Astrocyte of the cerebellum (primary cell): ENCODE measurements at regions of chr5 and their contacts with region 1.

Region 1: DNA sequence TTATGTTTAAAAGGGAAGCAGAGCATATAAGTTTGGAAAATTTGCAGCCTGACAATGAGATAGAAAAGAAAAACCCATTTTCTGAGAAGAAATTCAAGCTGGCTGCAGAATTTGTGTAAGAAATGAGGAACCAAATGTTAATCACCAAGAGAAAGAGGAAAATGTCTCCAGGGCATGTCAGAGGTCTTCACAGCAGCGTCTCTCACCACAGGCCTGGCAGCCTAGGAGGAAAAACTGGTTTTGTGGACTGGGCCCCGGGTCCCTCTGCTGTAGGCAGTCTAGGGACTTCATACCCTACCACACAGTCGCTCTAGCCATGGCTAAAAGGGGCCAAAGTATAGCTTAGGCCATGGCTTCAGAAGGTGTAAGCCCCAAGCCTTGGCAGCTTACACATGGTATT is 32.1 kb upstream of the HSD17B4 start:
- DNase-seq: no peak
- H3K4me3 ChIP-seq: no peak overlapping the region
- CTCF ChIP-seq: no peak

Region 2: DNA sequence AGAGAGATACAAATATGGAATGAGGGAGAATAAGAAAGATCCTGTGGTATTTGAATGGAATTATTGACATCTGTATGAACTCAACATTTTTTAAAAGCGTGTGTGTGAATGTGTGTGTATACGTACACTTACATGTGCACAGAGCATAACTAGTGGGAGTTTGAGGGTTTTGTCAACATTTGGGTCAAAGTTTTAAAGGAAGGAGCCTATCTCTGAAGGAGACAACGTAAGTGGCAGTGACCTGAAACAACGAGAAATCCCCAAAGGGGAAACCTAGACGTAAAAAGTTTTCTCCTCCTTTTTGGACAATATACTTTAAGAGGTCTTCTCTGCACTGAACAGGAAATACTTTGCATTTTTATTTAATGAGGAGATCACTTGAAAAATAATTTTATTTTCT is 391.6 kb before region 1 on chr5:
- in situ Hi-C with region 1: loop called (anchors 5 kb)
- DNase-seq: no peak
- H3K4me3 ChIP-seq: no peak overlapping the region
- CTCF ChIP-seq: no peak